Activated CD4-positive, alpha-beta memory T cell treated with anti-CD3 and anti-CD28 coated beads for 36 hours (primary cell): ENCODE measurements at regions of chr15 and their contacts with region 1.

Region 1: GRCh38 chr15:65869127-65869953 is at the start of gene RAB11A:
- DNase-seq: peak; percentile 97
- H3K4me3 Mint-ChIP-seq: peak within 1 kb of the TSS; percentile 96
- H3K27ac Mint-ChIP-seq: peak within 1 kb of the TSS; percentile 96
- H3K4me1 Mint-ChIP-seq: peaks cover 26% of the 10 kb centered on the region
- H3K27me3 Mint-ChIP-seq: peaks cover 4% of the 10 kb centered on the region
- total RNA-seq, gene RAB11A: 171 to 181 TPM

Region 2: DNA sequence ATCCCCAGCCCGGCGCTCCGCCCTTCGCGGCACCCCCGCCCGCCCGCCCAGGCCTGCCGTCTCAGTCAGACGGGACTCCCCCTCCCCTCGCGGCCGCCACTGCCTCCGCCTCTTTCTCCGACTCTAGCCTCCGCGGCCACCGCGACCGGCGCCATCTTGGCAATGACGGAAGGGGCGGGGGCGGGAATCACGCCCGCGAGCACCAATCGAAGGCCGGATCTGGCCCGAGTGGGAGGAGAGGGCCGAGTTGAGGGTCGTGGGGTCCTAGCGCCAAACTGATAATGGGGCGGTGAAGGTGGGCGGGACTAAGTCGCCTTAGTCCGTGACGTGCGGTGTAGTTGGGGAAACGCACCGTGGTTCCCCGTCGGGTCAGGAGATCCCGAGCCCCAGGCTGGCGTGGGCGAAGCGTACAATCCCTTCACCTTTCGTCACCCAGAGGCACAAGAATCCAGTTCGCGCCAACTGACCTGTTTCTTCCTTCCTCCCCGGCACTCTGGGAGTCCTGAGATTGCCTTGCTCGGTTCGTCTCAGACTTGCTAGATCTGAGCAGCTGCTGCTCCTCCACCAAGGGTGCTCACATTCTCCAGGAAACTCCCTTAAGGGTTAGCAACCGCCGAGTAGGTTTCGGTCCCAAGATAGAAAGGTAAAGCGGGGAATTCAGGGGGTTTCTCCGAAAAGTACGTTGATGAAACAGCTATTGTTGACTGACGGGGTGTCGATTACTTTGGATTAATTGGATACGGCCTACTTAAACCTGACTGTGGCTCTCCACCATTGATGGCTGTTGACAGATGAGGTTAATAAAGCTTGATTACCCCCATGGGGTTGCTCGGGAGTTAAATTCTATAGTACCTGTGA is 77.0 kb before region 1 on chr15 and contains the start of gene DENND4A:
- CTCF ChIA-PET with region 1: interaction called, 7 read pairs
- POLR2A ChIA-PET with region 1: interaction called, 17 read pairs
- intact Hi-C with region 1: loop called (anchors 5 kb)
- DNase-seq: peak; percentile 99
- H3K4me3 Mint-ChIP-seq: peak within 1 kb of the TSS; percentile 82
- H3K27ac Mint-ChIP-seq: peak within 1 kb of the TSS; percentile 97
- H3K4me1 Mint-ChIP-seq: peaks cover 60% of the 10 kb centered on the region
- H3K27me3 Mint-ChIP-seq: no peaks in the 10 kb centered on the region
- total RNA-seq, gene DENND4A: 39.9 to 41.3 TPM

Region 3: GRCh38 chr15:65856821-65857455 is 12.4 kb before region 1 on chr15:
- CTCF ChIA-PET with region 1: interaction called, 19 read pairs
- POLR2A ChIA-PET with region 1: no interaction called
- intact Hi-C with region 1: no loop called
- DNase-seq: peak; percentile 85
- H3K4me3 Mint-ChIP-seq: peak overlapping the region; percentile 35
- H3K27ac Mint-ChIP-seq: no peak overlapping the region
- H3K4me1 Mint-ChIP-seq: peaks cover 8% of the 10 kb centered on the region
- H3K27me3 Mint-ChIP-seq: no peaks in the 10 kb centered on the region

Region 4: GRCh38 chr15:65916664-65917406 is 47.5 kb after region 1 on chr15:
- CTCF ChIA-PET with region 1: interaction called, 3 read pairs
- POLR2A ChIA-PET with region 1: interaction called, 3 read pairs
- intact Hi-C with region 1: loop called (anchors 2 kb)
- DNase-seq: peak; percentile 72
- H3K4me3 Mint-ChIP-seq: no peak overlapping the region
- H3K27ac Mint-ChIP-seq: peak overlapping the region; percentile 21
- H3K4me1 Mint-ChIP-seq: peaks cover 32% of the 10 kb centered on the region
- H3K27me3 Mint-ChIP-seq: no peaks in the 10 kb centered on the region

Region 5: DNA sequence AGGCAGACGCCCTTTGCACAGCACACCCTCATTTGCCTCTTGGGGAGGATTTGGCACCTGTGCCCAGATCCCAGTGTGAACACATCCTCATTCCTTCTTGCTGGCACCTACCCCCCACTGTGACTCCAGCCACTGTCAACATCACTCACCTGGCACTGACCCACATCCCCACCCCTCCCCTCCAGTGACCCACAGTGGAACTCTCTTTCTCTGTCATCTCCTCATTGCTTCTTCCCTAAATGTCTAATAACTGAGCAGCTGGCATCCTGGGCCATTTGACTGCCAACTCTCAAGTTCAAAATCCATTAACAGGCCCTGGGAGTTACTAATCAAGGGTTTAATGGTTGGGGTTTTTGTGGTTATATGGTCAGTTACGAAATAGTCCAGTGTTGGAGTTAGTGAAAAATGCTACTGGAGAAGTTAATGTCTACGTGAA is 613.8 kb after region 1 on chr15:
- CTCF ChIA-PET with region 1: no interaction called
- POLR2A ChIA-PET with region 1: no interaction called
- intact Hi-C with region 1: no loop called
- DNase-seq: no peak
- H3K4me3 Mint-ChIP-seq: no peak overlapping the region
- H3K27ac Mint-ChIP-seq: no peak overlapping the region
- H3K4me1 Mint-ChIP-seq: no peaks in the 10 kb centered on the region
- H3K27me3 Mint-ChIP-seq: no peaks in the 10 kb centered on the region

Region 6: DNA sequence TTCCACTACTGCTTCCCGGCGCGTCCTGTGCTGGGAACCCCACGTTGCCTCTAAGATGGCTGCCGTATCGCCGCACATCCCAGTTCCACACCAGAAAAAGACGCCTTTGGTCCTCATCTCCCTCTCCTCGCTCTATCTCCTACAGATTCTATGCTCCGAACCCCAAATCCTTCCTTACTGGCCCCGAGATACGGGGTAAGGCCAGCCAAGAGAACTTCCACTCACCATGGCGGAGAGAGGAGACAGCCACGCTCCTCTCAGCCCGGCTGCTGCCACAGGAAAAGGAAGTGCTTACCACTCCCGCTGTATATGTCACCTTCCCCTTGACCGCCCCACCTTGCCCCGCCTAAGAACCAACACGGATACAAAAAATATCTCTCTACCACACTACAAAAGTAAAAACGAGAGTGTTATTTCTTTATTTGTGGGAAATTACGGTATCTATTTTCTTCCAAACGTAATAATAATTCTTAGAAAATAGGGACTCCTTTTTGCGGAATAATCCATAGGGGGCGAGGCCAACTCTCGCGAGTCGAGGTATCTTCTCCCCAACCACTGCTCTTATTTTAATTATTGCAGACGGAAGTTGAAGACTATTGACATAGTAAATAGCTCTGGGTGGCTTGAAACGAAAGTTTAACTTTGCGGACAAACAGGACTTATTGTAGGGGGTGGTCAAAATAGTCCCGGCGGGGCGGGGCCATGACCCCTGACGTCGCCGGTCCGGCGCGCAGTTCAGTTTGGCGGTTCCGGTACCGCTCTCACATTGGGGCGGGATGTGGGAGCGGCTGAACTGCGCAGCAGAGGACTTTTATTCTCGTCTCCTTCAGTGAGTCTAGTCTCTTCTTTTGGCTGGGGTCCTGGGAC is 635.5 kb after region 1 on chr15 and contains the starts of genes RPL4 and ZWILCH:
- CTCF ChIA-PET with region 1: no interaction called
- POLR2A ChIA-PET with region 1: no interaction called
- intact Hi-C with region 1: loop called (anchors 5 kb)
- DNase-seq: peak; percentile 82
- H3K4me3 Mint-ChIP-seq: peak within 1 kb of the TSS; percentile 95
- H3K27ac Mint-ChIP-seq: peak within 1 kb of the TSS; percentile 95
- H3K4me1 Mint-ChIP-seq: peaks cover 49% of the 10 kb centered on the region
- H3K27me3 Mint-ChIP-seq: no peaks in the 10 kb centered on the region
- total RNA-seq, gene RPL4: 5,151 to 5,211 TPM
- total RNA-seq, gene ZWILCH: 29.6 to 31.1 TPM